ENCODE measurements at regions of chr2 and their contacts with region 1.

Region 1: GRCh38 chr2:173667417-173667816 is 297.8 kb downstream of the SP3 start:
- DNase-seq: peak; percentile 38
- H3K4me3 Mint-ChIP-seq: no peak overlapping the region
- H3K27ac Mint-ChIP-seq: no peak overlapping the region
- H3K4me1 Mint-ChIP-seq: peaks cover 10% of the 10 kb centered on the region
- H3K27me3 Mint-ChIP-seq: no peaks in the 10 kb centered on the region
- CTCF ChIP-seq: peak; percentile 39

Region 2: DNA sequence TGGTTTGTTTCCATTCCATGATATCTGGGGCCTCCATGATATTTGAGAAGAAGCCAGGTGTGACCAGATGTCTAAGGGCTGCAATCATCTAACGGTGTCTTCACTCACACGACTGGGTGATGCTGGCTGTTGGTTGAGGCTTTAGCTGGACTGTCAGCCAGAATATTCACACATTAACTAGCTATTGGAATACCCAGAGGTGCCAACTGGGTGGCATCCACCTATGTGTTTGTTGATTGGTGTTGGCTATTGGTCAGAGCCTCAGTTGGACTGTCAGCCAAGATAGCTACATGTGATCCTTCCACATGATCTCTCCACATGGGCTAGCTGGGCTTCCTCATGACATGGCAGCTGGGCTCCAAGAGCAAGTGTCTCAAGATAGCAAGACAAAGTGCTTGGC is 195.3 kb before region 1 on chr2:
- CTCF ChIA-PET with region 1: no interaction called
- intact Hi-C with region 1: loop called (anchors 10 kb)
- DNase-seq: no peak
- H3K4me3 Mint-ChIP-seq: no peak overlapping the region
- H3K27ac Mint-ChIP-seq: no peak overlapping the region
- H3K4me1 Mint-ChIP-seq: no peaks in the 10 kb centered on the region
- H3K27me3 Mint-ChIP-seq: no peaks in the 10 kb centered on the region
- CTCF ChIP-seq: no peak